Calu3 (cell line): ENCODE measurements at regions of chr10 and their contacts with region 1.

Region 1: GRCh38 chr10:125868372-125868975 is 12.6 kb downstream of the DHX32 start:
- DNase-seq: peak; percentile 18
- H3K4me3 Mint-ChIP-seq: no peak overlapping the region
- H3K27ac Mint-ChIP-seq: no peak overlapping the region
- H3K4me1 Mint-ChIP-seq: no peaks in the 10 kb centered on the region
- H3K27me3 Mint-ChIP-seq: no peaks in the 10 kb centered on the region
- CTCF ChIP-seq: peak; percentile 46

Region 2: DNA sequence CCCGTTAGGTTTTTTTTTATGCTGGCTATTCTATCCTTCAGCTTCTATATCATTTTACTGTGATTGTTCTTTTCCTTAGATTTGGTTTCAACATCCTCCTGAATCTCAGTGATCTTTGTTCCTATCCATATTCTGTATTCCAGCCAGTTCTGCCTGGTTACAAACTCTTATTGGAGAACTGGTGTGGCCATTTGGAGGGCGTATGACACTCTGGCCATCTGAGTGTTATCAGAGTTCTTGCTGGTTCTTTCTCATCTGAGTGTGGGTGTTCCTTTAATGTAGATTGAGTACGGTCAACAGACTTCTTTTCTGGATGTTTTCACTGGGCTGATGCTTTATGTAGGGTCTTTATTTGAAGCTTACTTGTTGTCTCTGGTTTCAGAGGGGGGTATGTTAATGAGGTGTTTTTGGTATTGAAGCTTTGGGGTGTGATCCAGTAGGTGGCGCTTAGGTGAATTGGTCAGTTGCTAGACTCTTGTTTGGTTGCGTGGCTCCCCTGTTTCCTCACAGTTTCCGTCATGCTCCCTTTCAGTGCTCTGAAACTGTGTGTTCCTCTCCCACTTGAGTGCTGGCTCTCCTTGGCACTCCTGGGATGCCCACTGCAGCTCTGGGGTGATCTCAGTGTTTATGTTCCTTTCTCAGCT is 108.6 kb after region 1 on chr10:
- CTCF ChIA-PET with region 1: no interaction called
- intact Hi-C with region 1: loop called (anchors 5 kb)
- DNase-seq: no peak
- H3K4me3 Mint-ChIP-seq: no peak overlapping the region
- H3K27ac Mint-ChIP-seq: no peak overlapping the region
- H3K4me1 Mint-ChIP-seq: no peaks in the 10 kb centered on the region
- H3K27me3 Mint-ChIP-seq: no peaks in the 10 kb centered on the region
- CTCF ChIP-seq: no peak